ENCODE measurements at regions of chr12 and their contacts with region 1.

Region 1: DNA sequence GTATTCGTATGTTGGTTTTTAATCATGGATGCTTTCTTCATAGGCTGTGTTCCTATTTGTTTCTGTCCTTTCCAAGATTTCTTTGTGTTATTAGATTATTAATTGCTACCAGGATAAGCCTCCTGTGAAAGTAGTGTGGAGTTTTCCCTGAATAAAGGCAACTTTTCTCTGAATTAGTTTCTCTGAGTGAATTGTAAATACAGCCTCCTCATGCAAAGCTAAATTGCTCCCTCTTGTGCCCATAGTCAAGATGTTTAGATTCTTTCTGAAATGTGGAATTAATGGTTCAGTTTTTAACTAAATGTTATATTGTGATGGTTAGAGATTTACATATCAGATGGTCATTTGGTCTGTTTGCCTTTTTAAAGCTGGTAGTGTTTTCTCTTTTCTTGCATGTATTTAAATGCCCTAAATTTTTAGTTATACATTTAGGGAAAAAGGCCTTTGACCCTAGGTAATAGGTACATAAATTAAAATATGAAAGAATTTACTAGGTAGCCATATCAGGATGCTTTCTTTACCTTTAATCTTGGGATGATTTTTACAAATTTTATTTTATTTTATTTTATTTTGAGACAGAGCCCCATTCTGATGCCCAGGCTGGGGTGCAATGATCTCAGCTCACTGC is 8.9 kb downstream of the APAF1 start:
- DNase-seq: peak; percentile 75
- ATAC-seq: peak; percentile 42
- H3K4me3 ChIP-seq: no peak overlapping the region
- H3K27ac ChIP-seq: no peak overlapping the region
- H3K4me1 ChIP-seq: peaks cover 8% of the 10 kb centered on the region
- H3K27me3 ChIP-seq: no peaks in the 10 kb centered on the region
- CTCF ChIP-seq: peak; percentile 90

Region 2: DNA sequence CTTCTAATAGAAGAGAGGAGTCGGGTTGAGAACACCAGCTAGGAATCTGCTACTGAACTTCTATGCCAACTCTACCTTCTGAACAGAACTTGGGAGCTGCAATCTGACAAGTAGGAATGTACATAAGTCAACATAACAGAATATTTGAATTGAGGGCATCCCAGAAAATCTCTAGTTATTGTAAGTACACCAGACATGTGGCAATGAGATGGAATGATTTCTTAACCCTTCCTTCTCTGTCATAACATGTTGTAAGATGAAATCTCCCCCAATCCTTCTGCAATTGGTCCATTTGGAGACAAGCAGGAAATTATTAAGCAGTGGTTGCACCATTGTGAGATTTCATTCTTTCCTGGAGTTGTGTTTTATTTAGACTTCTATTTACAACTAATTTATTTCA is 207.3 kb before region 1 on chr12:
- CTCF ChIA-PET with region 1: no interaction called
- POLR2A ChIA-PET with region 1: no interaction called
- intact Hi-C with region 1: no loop called
- DNase-seq: no peak
- ATAC-seq: no peak
- H3K4me3 ChIP-seq: no peak overlapping the region
- H3K27ac ChIP-seq: no peak overlapping the region
- H3K4me1 ChIP-seq: no peaks in the 10 kb centered on the region
- H3K27me3 ChIP-seq: peaks cover 50% of the 10 kb centered on the region
- CTCF ChIP-seq: no peak

Region 3: DNA sequence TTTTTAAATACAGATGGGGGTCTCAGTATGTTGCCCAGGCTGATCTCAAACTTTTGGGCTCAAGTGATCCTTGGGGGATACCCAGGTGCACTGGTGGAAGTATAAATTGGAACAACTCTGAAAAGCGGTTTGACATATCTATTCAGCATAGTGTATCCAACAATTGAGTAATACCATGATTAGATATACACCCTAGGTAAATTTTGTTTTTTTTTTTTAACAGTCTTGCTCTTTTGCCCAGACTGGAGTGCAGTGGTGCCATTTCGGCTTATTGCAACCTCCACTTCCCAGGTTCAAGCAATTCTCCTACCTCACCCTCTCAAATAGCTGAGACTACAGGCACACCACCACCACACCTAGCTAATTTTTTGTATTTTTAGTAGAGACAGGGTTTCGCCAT is 92.1 kb before region 1 on chr12:
- CTCF ChIA-PET with region 1: no interaction called
- POLR2A ChIA-PET with region 1: no interaction called
- intact Hi-C with region 1: loop called (anchors 1 kb)
- DNase-seq: no peak
- ATAC-seq: no peak
- H3K4me3 ChIP-seq: no peak overlapping the region
- H3K27ac ChIP-seq: no peak overlapping the region
- H3K4me1 ChIP-seq: no peaks in the 10 kb centered on the region
- H3K27me3 ChIP-seq: no peaks in the 10 kb centered on the region
- CTCF ChIP-seq: no peak

Region 4: GRCh38 chr12:98606357-98606988 is 47.5 kb before region 1 on chr12:
- CTCF ChIA-PET with region 1: no interaction called
- POLR2A ChIA-PET with region 1: no interaction called
- intact Hi-C with region 1: loop called (anchors 1 kb)
- DNase-seq: no peak
- ATAC-seq: peak; percentile 61; the same call in 1 of the 2 replicates
- H3K4me3 ChIP-seq: no peak overlapping the region
- H3K27ac ChIP-seq: no peak overlapping the region
- H3K4me1 ChIP-seq: no peaks in the 10 kb centered on the region
- H3K27me3 ChIP-seq: no peaks in the 10 kb centered on the region
- CTCF ChIP-seq: peak; percentile 35

Region 5: GRCh38 chr12:98618952-98619351 is 35.0 kb before region 1 on chr12:
- CTCF ChIA-PET with region 1: no interaction called
- POLR2A ChIA-PET with region 1: no interaction called
- intact Hi-C with region 1: no loop called
- DNase-seq: no peak
- ATAC-seq: no peak
- H3K4me3 ChIP-seq: no peak overlapping the region
- H3K27ac ChIP-seq: no peak overlapping the region
- H3K4me1 ChIP-seq: no peaks in the 10 kb centered on the region
- H3K27me3 ChIP-seq: no peaks in the 10 kb centered on the region
- CTCF ChIP-seq: no peak

Measured in PC-3 (cell line).